ENCODE measurements at regions of chr11 and their contacts with region 1.

Region 1: GRCh38 chr11:123054301-123055065 is 7.5 kb downstream of the HSPA8 start:
- DNase-seq: peak in 4 of 14 experiments; percentile 39 to 83 (median 80)
- ATAC-seq: peak; percentile 87
- H3K4me3 ChIP-seq: no peak overlapping the region
- H3K4me3 Mint-ChIP-seq: peak overlapping the region; percentile 73
- H3K27ac ChIP-seq: peak overlapping the region in 1 of 2 donors; percentile 11
- H3K27ac Mint-ChIP-seq: peak overlapping the region; percentile 98
- H3K4me1 ChIP-seq: peaks cover 52% of the 10 kb centered on the region
- H3K4me1 Mint-ChIP-seq: peaks cover 55% of the 10 kb centered on the region
- H3K27me3 ChIP-seq: no peaks in the 10 kb centered on the region
- H3K27me3 Mint-ChIP-seq: no peaks in the 10 kb centered on the region
- CTCF ChIP-seq: peak; percentile 69

Region 2: GRCh38 chr11:122863704-122864326 is 190.7 kb before region 1 on chr11:
- CTCF ChIA-PET with region 1: interaction called, 7 read pairs
- POLR2A ChIA-PET with region 1: interaction called, 6 read pairs
- intact Hi-C with region 1: loop called (anchors 1 kb)
- DNase-seq: peak in 12 of 14 experiments; percentile 12 to 66 (median 31)
- ATAC-seq: peak; percentile 49
- H3K4me3 ChIP-seq: no peak overlapping the region
- H3K4me3 Mint-ChIP-seq: no peak overlapping the region
- H3K27ac ChIP-seq: no peak overlapping the region
- H3K27ac Mint-ChIP-seq: no peak overlapping the region
- H3K4me1 ChIP-seq: no peaks in the 10 kb centered on the region
- H3K4me1 Mint-ChIP-seq: no peaks in the 10 kb centered on the region
- H3K27me3 ChIP-seq: no peaks in the 10 kb centered on the region
- H3K27me3 Mint-ChIP-seq: no peaks in the 10 kb centered on the region
- CTCF ChIP-seq: peak; percentile 93

Region 3: GRCh38 chr11:123083623-123084029 is 29.1 kb after region 1 on chr11:
- CTCF ChIA-PET with region 1: interaction called, 7 read pairs
- POLR2A ChIA-PET with region 1: interaction called, 45 read pairs
- intact Hi-C with region 1: no loop called
- DNase-seq: peak; percentile 42 to 90 (median 70)
- ATAC-seq: peak; percentile 35
- H3K4me3 ChIP-seq: no peak overlapping the region
- H3K4me3 Mint-ChIP-seq: peak overlapping the region; percentile 54
- H3K27ac ChIP-seq: peak overlapping the region in 1 of 2 donors; percentile 21
- H3K27ac Mint-ChIP-seq: peak overlapping the region; percentile 79
- H3K4me1 ChIP-seq: peaks cover 53% of the 10 kb centered on the region
- H3K4me1 Mint-ChIP-seq: peaks cover 46% of the 10 kb centered on the region
- H3K27me3 ChIP-seq: no peaks in the 10 kb centered on the region
- H3K27me3 Mint-ChIP-seq: no peaks in the 10 kb centered on the region
- CTCF ChIP-seq: no peak

Region 4: DNA sequence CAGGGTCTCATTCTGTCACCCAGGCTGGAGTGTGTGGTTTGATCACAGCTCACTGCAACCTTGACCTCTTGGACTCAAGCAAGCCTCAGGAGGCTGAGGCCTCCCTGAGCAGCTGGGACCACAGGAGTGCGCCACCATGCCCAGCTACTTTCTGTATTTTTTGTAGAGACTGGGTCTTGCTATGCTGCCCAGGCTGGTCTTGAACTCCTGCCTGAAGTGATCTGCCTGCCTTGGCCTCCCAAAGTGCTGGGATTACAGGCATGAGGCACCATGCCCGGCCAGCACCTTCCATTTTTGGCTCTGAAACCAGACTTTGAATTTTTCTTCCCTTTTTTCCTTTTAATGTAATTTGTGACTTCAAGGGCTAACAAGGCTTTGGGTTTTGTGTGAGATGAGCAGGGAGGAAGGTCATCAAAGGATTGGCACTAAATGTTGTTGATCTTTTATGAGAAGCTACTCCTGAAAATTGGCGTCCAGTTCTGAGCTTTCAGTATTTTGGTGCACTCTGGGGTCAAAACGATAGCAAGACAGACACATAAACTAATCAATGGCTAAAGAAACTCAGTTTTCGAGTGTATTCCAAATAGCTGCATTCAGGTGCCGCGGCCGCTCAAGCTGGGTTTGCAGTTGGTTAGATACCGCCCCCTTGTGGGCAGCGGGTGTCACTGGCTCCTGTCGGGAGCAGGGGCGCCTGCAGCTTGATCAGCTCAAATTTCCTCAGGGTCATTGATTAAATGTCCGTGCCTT is 192.4 kb after region 1 on chr11:
- CTCF ChIA-PET with region 1: interaction called, 12 read pairs
- POLR2A ChIA-PET with region 1: interaction called, 9 read pairs
- intact Hi-C with region 1: loop called in 1 of 2 experiments (anchors 5 kb)
- DNase-seq: peak; percentile 70 to 89 (median 79)
- ATAC-seq: peak; percentile 92
- H3K4me3 ChIP-seq: no peak overlapping the region
- H3K4me3 Mint-ChIP-seq: no peak overlapping the region
- H3K27ac ChIP-seq: no peak overlapping the region
- H3K27ac Mint-ChIP-seq: no peak overlapping the region
- H3K4me1 ChIP-seq: peaks cover 7% of the 10 kb centered on the region
- H3K4me1 Mint-ChIP-seq: no peaks in the 10 kb centered on the region
- H3K27me3 ChIP-seq: no peaks in the 10 kb centered on the region
- H3K27me3 Mint-ChIP-seq: no peaks in the 10 kb centered on the region
- CTCF ChIP-seq: peak; percentile 95